ENCODE measurements at regions of chr17 and their contacts with region 1.

Region 1: GRCh38 chr17:62968445-62968923 is 2.4 kb downstream of the TANC2 start:
- DNase-seq: peak; percentile 44
- H3K4me3 Mint-ChIP-seq: peak overlapping the region; percentile 47
- H3K27ac Mint-ChIP-seq: no peak overlapping the region
- H3K4me1 Mint-ChIP-seq: peaks cover 30% of the 10 kb centered on the region
- H3K27me3 Mint-ChIP-seq: peaks cover 46% of the 10 kb centered on the region

Region 2: GRCh38 chr17:62653002-62653825 is 315.3 kb before region 1 on chr17:
- intact Hi-C with region 1: loop called (anchors 1 kb)
- DNase-seq: peak; percentile 78
- H3K4me3 Mint-ChIP-seq: peak overlapping the region; percentile 61
- H3K27ac Mint-ChIP-seq: peak overlapping the region; percentile 51
- H3K4me1 Mint-ChIP-seq: peaks cover 21% of the 10 kb centered on the region
- H3K27me3 Mint-ChIP-seq: peaks cover 77% of the 10 kb centered on the region

Region 3: GRCh38 chr17:62671583-62672312 is 296.7 kb before region 1 on chr17:
- intact Hi-C with region 1: loop called (anchors 1 kb)
- DNase-seq: no peak
- H3K4me3 Mint-ChIP-seq: no peak overlapping the region
- H3K27ac Mint-ChIP-seq: no peak overlapping the region
- H3K4me1 Mint-ChIP-seq: no peaks in the 10 kb centered on the region
- H3K27me3 Mint-ChIP-seq: peaks cover 11% of the 10 kb centered on the region

Region 4: DNA sequence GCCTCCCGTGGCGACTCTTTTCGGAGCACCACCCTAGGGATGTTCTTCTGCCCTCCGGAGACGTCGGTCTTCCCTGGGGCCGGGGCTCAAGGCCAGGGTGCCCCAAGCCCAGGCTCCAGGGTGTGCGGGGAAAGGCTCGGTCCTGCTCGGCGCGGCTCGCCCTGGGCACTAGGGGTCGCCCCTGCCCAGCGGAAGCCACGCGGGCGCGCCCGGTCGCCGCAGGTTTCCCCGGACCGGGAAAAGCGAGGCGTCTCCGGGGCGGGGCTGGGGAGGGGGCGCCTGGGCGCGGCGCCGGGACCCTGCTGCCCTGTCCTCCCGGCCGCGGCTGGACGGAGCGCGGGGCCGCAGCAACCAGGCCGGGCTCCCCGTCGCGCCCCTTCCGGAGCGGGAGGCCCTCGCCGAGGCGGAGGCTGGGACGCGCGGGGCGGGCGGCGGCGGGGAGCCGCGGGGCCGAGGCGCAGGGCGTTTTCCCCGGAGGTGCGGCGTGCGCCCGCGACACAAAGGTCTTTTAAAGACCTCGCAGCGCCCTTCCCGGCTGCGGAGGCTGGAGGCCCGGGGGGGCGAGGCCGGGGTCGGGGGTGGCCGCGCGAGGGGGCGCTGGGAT is 264.6 kb before region 1 on chr17:
- intact Hi-C with region 1: loop called (anchors 1 kb)
- DNase-seq: peak; percentile 55
- H3K4me3 Mint-ChIP-seq: no peak overlapping the region
- H3K27ac Mint-ChIP-seq: no peak overlapping the region
- H3K4me1 Mint-ChIP-seq: no peaks in the 10 kb centered on the region
- H3K27me3 Mint-ChIP-seq: peaks cover 44% of the 10 kb centered on the region

Region 5: GRCh38 chr17:62724398-62725146 is 243.9 kb before region 1 on chr17:
- intact Hi-C with region 1: loop called (anchors 1 kb)
- DNase-seq: peak; percentile 45
- H3K4me3 Mint-ChIP-seq: peak overlapping the region; percentile 23
- H3K27ac Mint-ChIP-seq: peak overlapping the region; percentile 85
- H3K4me1 Mint-ChIP-seq: peaks cover 20% of the 10 kb centered on the region
- H3K27me3 Mint-ChIP-seq: peaks cover 85% of the 10 kb centered on the region

Region 6: DNA sequence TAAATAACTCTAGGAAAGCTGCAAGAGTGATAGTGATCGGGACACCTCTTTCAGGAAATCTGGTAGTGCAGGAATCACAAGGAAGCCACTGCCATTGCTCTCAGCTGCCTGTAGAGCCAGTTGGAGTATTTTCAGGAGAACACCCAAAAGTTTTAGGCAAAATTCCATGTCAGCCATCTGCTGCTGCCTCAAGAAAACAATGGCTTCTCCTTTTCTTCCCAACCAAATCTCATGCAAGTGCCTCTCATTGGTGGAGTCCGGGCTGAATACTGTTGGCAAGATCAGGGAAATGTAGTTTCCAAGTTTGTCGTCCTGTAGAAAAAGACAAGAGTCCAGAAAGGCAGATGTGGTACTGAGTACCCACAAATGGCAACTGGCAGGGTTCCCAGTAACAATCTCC is 57.4 kb before region 1 on chr17:
- intact Hi-C with region 1: no loop called
- DNase-seq: no peak
- H3K4me3 Mint-ChIP-seq: no peak overlapping the region
- H3K27ac Mint-ChIP-seq: no peak overlapping the region
- H3K4me1 Mint-ChIP-seq: no peaks in the 10 kb centered on the region
- H3K27me3 Mint-ChIP-seq: peaks cover 3% of the 10 kb centered on the region

Region 7: GRCh38 chr17:62981928-62982327 is 13.4 kb after region 1 on chr17:
- intact Hi-C with region 1: no loop called
- DNase-seq: no peak
- H3K4me3 Mint-ChIP-seq: no peak overlapping the region
- H3K27ac Mint-ChIP-seq: no peak overlapping the region
- H3K4me1 Mint-ChIP-seq: no peaks in the 10 kb centered on the region
- H3K27me3 Mint-ChIP-seq: no peaks in the 10 kb centered on the region